Endothelial cell of umbilical vein (primary cell): ENCODE measurements at regions of chr5 and their contacts with region 1.

Region 1: GRCh38 chr5:115309751-115310370 is 13.4 kb upstream of the CCDC112 start:
- DNase-seq: peak; percentile 69
- H3K4me3 ChIP-seq: no peak overlapping the region
- H3K27ac ChIP-seq: no peak overlapping the region
- H3K4me1 ChIP-seq: no peaks in the 10 kb centered on the region
- H3K27me3 ChIP-seq: no peaks in the 10 kb centered on the region
- CTCF ChIP-seq: peak in 1 of 2 donors; percentile 16
- POLR2A ChIP-seq: no peak

Region 2: GRCh38 chr5:115209279-115209678 is 100.6 kb before region 1 on chr5:
- CTCF ChIA-PET with region 1: no interaction called
- POLR2A ChIA-PET with region 1: no interaction called
- dilution Hi-C with region 1: no loop called
- intact Hi-C with region 1: no loop called
- DNase-seq: no peak
- H3K4me3 ChIP-seq: no peak overlapping the region
- H3K27ac ChIP-seq: no peak overlapping the region
- H3K4me1 ChIP-seq: no peaks in the 10 kb centered on the region
- H3K27me3 ChIP-seq: no peaks in the 10 kb centered on the region
- CTCF ChIP-seq: no peak
- POLR2A ChIP-seq: no peak

Region 3: GRCh38 chr5:115296124-115297022 is 13.5 kb before region 1 on chr5 and contains the start of gene CCDC112:
- CTCF ChIA-PET with region 1: interaction called, 24 read pairs
- POLR2A ChIA-PET with region 1: no interaction called
- dilution Hi-C with region 1: no loop called
- intact Hi-C with region 1: no loop called
- DNase-seq: peak; percentile 75
- H3K4me3 ChIP-seq: peak within 1 kb of the TSS; percentile 91 to 93 (median 92)
- H3K27ac ChIP-seq: peak within 1 kb of the TSS; percentile 3
- H3K4me1 ChIP-seq: peaks cover 9% of the 10 kb centered on the region
- H3K27me3 ChIP-seq: peaks cover 0 to 2% of the 10 kb centered on the region in 2 experiments
- CTCF ChIP-seq: peak in 1 of 2 donors; percentile 9
- POLR2A ChIP-seq: peak; percentile 85
- total RNA-seq, gene CCDC112: 9.6 TPM in 2 replicates

Region 4: DNA sequence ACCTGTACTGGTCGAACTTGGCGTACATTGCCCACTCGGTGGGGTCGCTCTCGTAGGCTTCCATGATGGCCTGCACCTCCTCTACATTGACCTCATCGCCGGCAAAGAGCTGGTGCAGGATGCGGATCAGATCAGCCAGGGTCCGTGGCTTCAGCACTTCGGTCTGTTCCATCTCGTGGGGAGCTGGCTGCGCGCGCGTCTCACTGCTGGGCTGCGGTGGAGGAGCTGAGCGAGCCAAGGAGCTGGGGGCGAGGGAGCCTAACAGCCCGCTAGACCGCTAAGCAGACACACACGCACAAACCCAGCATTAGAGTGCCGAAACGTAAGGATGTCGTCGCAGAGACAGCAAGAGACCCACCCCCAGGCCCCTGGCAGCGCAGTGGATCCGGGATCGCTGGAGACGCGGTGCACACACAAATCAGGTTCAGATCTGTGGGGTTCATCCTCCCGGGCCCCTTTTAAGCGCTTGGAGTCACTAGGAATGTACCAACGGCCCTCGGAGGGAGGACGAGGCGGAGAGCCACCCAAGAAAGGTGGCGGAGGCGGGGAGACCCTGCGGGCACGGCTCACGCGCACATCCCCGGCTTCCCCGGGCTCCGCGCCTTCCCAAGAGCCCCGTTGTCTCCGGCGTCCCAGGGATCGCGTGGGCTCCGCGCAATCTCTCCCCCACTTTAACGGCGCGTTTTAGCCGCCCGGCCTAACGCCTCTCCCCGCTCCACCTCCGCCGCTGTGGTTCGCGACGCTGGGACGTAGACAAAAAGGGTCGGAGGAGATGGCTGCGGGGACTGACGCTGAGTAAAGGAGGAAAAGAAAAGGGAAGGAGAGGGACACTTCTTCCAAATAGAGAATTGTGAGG is 506.6 kb after region 1 on chr5 and contains the start of gene CDO1:
- CTCF ChIA-PET with region 1: no interaction called
- POLR2A ChIA-PET with region 1: no interaction called
- dilution Hi-C with region 1: no loop called
- intact Hi-C with region 1: no loop called
- DNase-seq: peak; percentile 53
- H3K4me3 ChIP-seq: peak within 1 kb of the TSS; percentile 6 to 40 (median 24)
- H3K27ac ChIP-seq: no peak within 1 kb of the TSS
- H3K4me1 ChIP-seq: peaks cover 6% of the 10 kb centered on the region
- H3K27me3 ChIP-seq: peaks cover 27 to 38% of the 10 kb centered on the region in 2 experiments
- CTCF ChIP-seq: no peak
- POLR2A ChIP-seq: no peak
- total RNA-seq, gene CDO1: 1.3 and 1.7 TPM in 2 replicates

Region 5: GRCh38 chr5:116068028-116068632 is 758.3 kb after region 1 on chr5:
- CTCF ChIA-PET with region 1: interaction called, 4 read pairs
- POLR2A ChIA-PET with region 1: no interaction called
- dilution Hi-C with region 1: no loop called
- intact Hi-C with region 1: loop called (anchors 2 kb)
- DNase-seq: peak; percentile 61
- H3K4me3 ChIP-seq: no peak overlapping the region
- H3K27ac ChIP-seq: no peak overlapping the region
- H3K4me1 ChIP-seq: no peaks in the 10 kb centered on the region
- H3K27me3 ChIP-seq: peaks cover 0 to 7% of the 10 kb centered on the region in 2 experiments
- CTCF ChIP-seq: peak; percentile 43 to 51
- POLR2A ChIP-seq: no peak